ENCODE measurements at regions of chr1 and their contacts with region 1.

Region 1: GRCh38 chr1:216542741-216543140 is 119.5 kb upstream of the USH2A start:
- DNase-seq: no peak
- ATAC-seq: no peak
- H3K4me3 ChIP-seq: no peak overlapping the region
- H3K27ac ChIP-seq: no peak overlapping the region
- H3K4me1 ChIP-seq: no peaks in the 10 kb centered on the region
- H3K27me3 ChIP-seq: no peaks in the 10 kb centered on the region
- CTCF ChIP-seq: no peak
- POLR2A ChIP-seq: no peak
- RAD21 ChIP-seq: no peak

Region 2: GRCh38 chr1:218182455-218182854 is 1639.7 kb after region 1 on chr1:
- CTCF ChIA-PET with region 1: no interaction called
- POLR2A ChIA-PET with region 1: no interaction called
- dilution Hi-C with region 1: no loop called
- in situ Hi-C with region 1: no loop called
- intact Hi-C with region 1: loop called (anchors 5 kb)
- DNase-seq: no peak
- ATAC-seq: no peak
- H3K4me3 ChIP-seq: no peak overlapping the region
- H3K27ac ChIP-seq: no peak overlapping the region
- H3K4me1 ChIP-seq: no peaks in the 10 kb centered on the region
- H3K27me3 ChIP-seq: peaks cover 1% of the 10 kb centered on the region; the same call in 1 of the 2 replicates
- CTCF ChIP-seq: no peak
- POLR2A ChIP-seq: no peak
- RAD21 ChIP-seq: no peak